ENCODE measurements at regions of chr16 and their contacts with region 1.

Region 1: GRCh38 chr16:11530171-11530940 is 56.4 kb downstream of the LITAF start:
- DNase-seq: no peak
- ATAC-seq: no peak
- H3K4me3 ChIP-seq: no peak overlapping the region
- H3K27ac ChIP-seq: no peak overlapping the region
- H3K4me1 ChIP-seq: no peaks in the 10 kb centered on the region
- H3K27me3 ChIP-seq: peaks cover 0 to 4% of the 10 kb centered on the region in 2 experiments; a peak in 2 of 4 replicates
- CTCF ChIP-seq: no peak
- EP300 ChIP-seq: no peak
- POLR2A ChIP-seq: no peak
- RAD21 ChIP-seq: no peak

Region 2: GRCh38 chr16:11396241-11397048 is 133.9 kb before region 1 on chr16:
- CTCF ChIA-PET with region 1: interaction called, 29 read pairs
- POLR2A ChIA-PET with region 1: no interaction called
- RAD21 ChIA-PET with region 1: interaction called, 9 read pairs
- SMC1A ChIA-PET with region 1: interaction called, 5 read pairs
- in situ Hi-C with region 1: no loop called
- intact Hi-C with region 1: no loop called
- DNase-seq: no peak
- ATAC-seq: peak; percentile 90
- H3K4me3 ChIP-seq: no peak overlapping the region
- H3K27ac ChIP-seq: no peak overlapping the region
- H3K4me1 ChIP-seq: no peaks in the 10 kb centered on the region
- H3K27me3 ChIP-seq: no peaks in the 10 kb centered on the region; a peak in 1 of 4 replicates
- CTCF ChIP-seq: peak; percentile 97 to 98 (median 97); a peak in 5 of 6 replicates
- EP300 ChIP-seq: no peak
- POLR2A ChIP-seq: no peak
- RAD21 ChIP-seq: peak; percentile 97

Region 3: GRCh38 chr16:11484691-11485258 is 45.6 kb before region 1 on chr16:
- CTCF ChIA-PET with region 1: no interaction called
- POLR2A ChIA-PET with region 1: no interaction called
- RAD21 ChIA-PET with region 1: no interaction called
- SMC1A ChIA-PET with region 1: no interaction called
- in situ Hi-C with region 1: no loop called
- intact Hi-C with region 1: no loop called
- DNase-seq: no peak
- ATAC-seq: no peak
- H3K4me3 ChIP-seq: no peak overlapping the region
- H3K27ac ChIP-seq: no peak overlapping the region
- H3K4me1 ChIP-seq: no peaks in the 10 kb centered on the region
- H3K27me3 ChIP-seq: no peaks in the 10 kb centered on the region
- CTCF ChIP-seq: no peak
- EP300 ChIP-seq: no peak
- POLR2A ChIP-seq: no peak
- RAD21 ChIP-seq: no peak

Region 4: GRCh38 chr16:11586856-11587642 is 56.7 kb after region 1 on chr16 and contains the start of gene LITAF:
- CTCF ChIA-PET with region 1: interaction called, 22 read pairs
- POLR2A ChIA-PET with region 1: no interaction called
- RAD21 ChIA-PET with region 1: interaction called, 6 read pairs
- SMC1A ChIA-PET with region 1: interaction called, 18 read pairs
- in situ Hi-C with region 1: no loop called
- intact Hi-C with region 1: loop called (anchors 5 kb)
- DNase-seq: no peak
- ATAC-seq: peak; percentile 78
- H3K4me3 ChIP-seq: peak within 1 kb of the TSS; percentile 97
- H3K27ac ChIP-seq: peak within 1 kb of the TSS; percentile 92
- H3K4me1 ChIP-seq: peaks cover 10% of the 10 kb centered on the region; the same call in 1 of the 2 replicates
- H3K27me3 ChIP-seq: no peaks in the 10 kb centered on the region
- CTCF ChIP-seq: peak in 1 of 3 experiments; percentile 19; a peak in 1 of 6 replicates
- EP300 ChIP-seq: no peak
- POLR2A ChIP-seq: peak; percentile 81
- RAD21 ChIP-seq: peak; percentile 33; the same call in 1 of the 2 replicates
- polyA plus RNA-seq, gene LITAF: 144 to 195 TPM

Region 5: GRCh38 chr16:11632464-11632939 is 102.1 kb after region 1 on chr16:
- CTCF ChIA-PET with region 1: interaction called, 26 read pairs
- POLR2A ChIA-PET with region 1: no interaction called
- RAD21 ChIA-PET with region 1: interaction called, 15 read pairs
- SMC1A ChIA-PET with region 1: interaction called, 25 read pairs
- in situ Hi-C with region 1: no loop called
- intact Hi-C with region 1: no loop called
- DNase-seq: no peak
- ATAC-seq: no peak
- H3K4me3 ChIP-seq: no peak overlapping the region
- H3K27ac ChIP-seq: no peak overlapping the region
- H3K4me1 ChIP-seq: peaks cover 8% of the 10 kb centered on the region
- H3K27me3 ChIP-seq: no peaks in the 10 kb centered on the region; a peak in 1 of 4 replicates
- CTCF ChIP-seq: no peak
- EP300 ChIP-seq: no peak
- POLR2A ChIP-seq: no peak
- RAD21 ChIP-seq: no peak

Region 6: DNA sequence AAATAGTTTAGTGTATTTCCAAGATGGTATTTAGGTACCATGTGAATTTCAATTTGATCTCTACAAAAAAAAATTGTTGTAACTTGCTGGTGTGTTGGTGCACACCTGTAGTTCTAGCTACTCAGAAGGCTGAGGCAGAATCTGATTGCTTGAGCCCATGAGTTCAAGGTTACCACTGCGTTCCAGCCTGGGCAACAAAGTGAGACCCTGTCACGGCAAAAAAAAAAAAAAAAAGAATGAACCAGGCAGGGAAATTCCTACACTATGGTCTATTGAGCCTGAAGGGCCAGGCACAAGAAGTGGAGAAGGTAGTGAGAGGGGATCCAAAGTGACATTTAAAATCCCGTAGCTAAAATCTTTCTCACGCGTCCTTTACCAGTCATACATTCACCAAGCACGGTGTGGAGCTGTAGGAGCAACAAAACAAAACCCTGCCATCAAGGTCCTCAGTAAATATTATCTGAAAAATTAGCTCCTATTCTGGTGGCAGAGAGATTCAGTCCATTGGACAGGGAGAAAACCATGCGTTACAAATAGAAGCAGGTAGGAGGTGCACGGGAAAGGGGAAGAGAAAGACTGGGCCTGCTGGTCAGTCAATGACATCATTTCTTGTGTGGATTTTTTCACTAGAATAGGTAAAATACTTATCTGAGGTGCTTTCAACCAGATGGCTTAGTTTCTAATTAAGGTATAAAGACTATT is 185.0 kb after region 1 on chr16:
- CTCF ChIA-PET with region 1: interaction called, 35 read pairs
- POLR2A ChIA-PET with region 1: no interaction called
- RAD21 ChIA-PET with region 1: interaction called, 12 read pairs
- SMC1A ChIA-PET with region 1: interaction called, 7 read pairs
- in situ Hi-C with region 1: loop called (anchors 5 kb)
- intact Hi-C with region 1: loop called (anchors 2 kb)
- DNase-seq: no peak
- ATAC-seq: peak; percentile 80
- H3K4me3 ChIP-seq: no peak overlapping the region
- H3K27ac ChIP-seq: peak overlapping the region; percentile 48; the same call in 1 of the 2 replicates
- H3K4me1 ChIP-seq: peaks cover 16% of the 10 kb centered on the region
- H3K27me3 ChIP-seq: no peaks in the 10 kb centered on the region
- CTCF ChIP-seq: 0 out of 6 replicates have a peak, but pooled peaks of 1 of the 3 experiments have one; percentile 3
- EP300 ChIP-seq: no peak
- POLR2A ChIP-seq: no peak
- RAD21 ChIP-seq: peak; percentile 36

Region 7: GRCh38 chr16:12507366-12507765 is 977.0 kb after region 1 on chr16:
- CTCF ChIA-PET with region 1: no interaction called
- POLR2A ChIA-PET with region 1: no interaction called
- RAD21 ChIA-PET with region 1: no interaction called
- SMC1A ChIA-PET with region 1: no interaction called
- in situ Hi-C with region 1: no loop called
- intact Hi-C with region 1: no loop called
- DNase-seq: no peak
- ATAC-seq: no peak
- H3K4me3 ChIP-seq: no peak overlapping the region
- H3K27ac ChIP-seq: no peak overlapping the region
- H3K4me1 ChIP-seq: no peaks in the 10 kb centered on the region; the same call in 1 of the 2 replicates
- H3K27me3 ChIP-seq: no peaks in the 10 kb centered on the region
- CTCF ChIP-seq: no peak
- EP300 ChIP-seq: no peak
- POLR2A ChIP-seq: no peak
- RAD21 ChIP-seq: no peak